ENCODE measurements at regions of chr14 and their contacts with region 1.

Region 1: GRCh38 chr14:22564463-22564862 is 24.6 kb downstream of the DAD1 start:
- DNase-seq: no peak
- ATAC-seq: no peak
- H3K4me3 ChIP-seq: no peak overlapping the region
- H3K4me3 Mint-ChIP-seq: peak overlapping the region in 2 of 3 donors; percentile 42 to 64
- H3K27ac ChIP-seq: peak overlapping the region; percentile 99
- H3K27ac Mint-ChIP-seq: peak overlapping the region; percentile 98 to 99
- H3K4me1 ChIP-seq: peaks cover 85 to 89% of the 10 kb centered on the region in 2 experiments
- H3K4me1 Mint-ChIP-seq: peaks cover 96 to 100% (median 98%) of the 10 kb centered on the region in 3 donors
- H3K27me3 ChIP-seq: no peaks in the 10 kb centered on the region
- H3K27me3 Mint-ChIP-seq: no peaks in the 10 kb centered on the region

Region 2: GRCh38 chr14:22776215-22776614 is 211.8 kb after region 1 on chr14:
- CTCF ChIA-PET with region 1: interaction called in 1 of 2 experiments, 12 read pairs
- POLR2A ChIA-PET with region 1: no interaction called
- DNase-seq: no peak
- ATAC-seq: no peak
- H3K4me3 ChIP-seq: no peak overlapping the region
- H3K4me3 Mint-ChIP-seq: no peak overlapping the region
- H3K27ac ChIP-seq: no peak overlapping the region
- H3K27ac Mint-ChIP-seq: no peak overlapping the region
- H3K4me1 ChIP-seq: no peaks in the 10 kb centered on the region
- H3K4me1 Mint-ChIP-seq: no peaks in the 10 kb centered on the region
- H3K27me3 ChIP-seq: no peaks in the 10 kb centered on the region
- H3K27me3 Mint-ChIP-seq: no peaks in the 10 kb centered on the region

Measured in T-cell (primary cell).